ENCODE measurements at regions of chr2 and their contacts with region 1.

Region 1: GRCh38 chr2:241870611-241871537 is 1.3 kb downstream of the RTP5 start:
- DNase-seq: no peak
- H3K4me3 ChIP-seq: no peak overlapping the region
- H3K4me3 Mint-ChIP-seq: no peak overlapping the region
- H3K27ac ChIP-seq: no peak overlapping the region
- H3K27ac Mint-ChIP-seq: peak overlapping the region in 2 of 7 donors; percentile 13 to 24
- H3K4me1 ChIP-seq: no peaks in the 10 kb centered on the region
- H3K4me1 Mint-ChIP-seq: no peaks in the 10 kb centered on the region
- H3K27me3 ChIP-seq: peaks cover 0 to 16% of the 10 kb centered on the region in 2 donors
- H3K27me3 Mint-ChIP-seq: peaks cover 12 to 28% (median 14%) of the 10 kb centered on the region in 3 donors
- CTCF ChIP-seq: no peak

Region 2: GRCh38 chr2:241895712-241896641 is 25.1 kb after region 1 on chr2:
- intact Hi-C with region 1: no loop called
- DNase-seq: no peak
- H3K4me3 ChIP-seq: no peak overlapping the region
- H3K4me3 Mint-ChIP-seq: no peak overlapping the region
- H3K27ac ChIP-seq: no peak overlapping the region
- H3K27ac Mint-ChIP-seq: peak overlapping the region in 1 of 7 donors; percentile 75
- H3K4me1 ChIP-seq: no peaks in the 10 kb centered on the region
- H3K4me1 Mint-ChIP-seq: no peaks in the 10 kb centered on the region
- H3K27me3 ChIP-seq: no peaks in the 10 kb centered on the region
- H3K27me3 Mint-ChIP-seq: peaks cover 0 to 2% (median 0%) of the 10 kb centered on the region in 3 donors
- CTCF ChIP-seq: no peak

Region 3: GRCh38 chr2:241909769-241910168 is 38.9 kb after region 1 on chr2:
- intact Hi-C with region 1: loop called in 1 of 2 experiments (anchors 2 kb)
- DNase-seq: no peak
- H3K4me3 ChIP-seq: no peak overlapping the region
- H3K4me3 Mint-ChIP-seq: no peak overlapping the region
- H3K27ac ChIP-seq: no peak overlapping the region
- H3K27ac Mint-ChIP-seq: no peak overlapping the region
- H3K4me1 ChIP-seq: no peaks in the 10 kb centered on the region
- H3K4me1 Mint-ChIP-seq: no peaks in the 10 kb centered on the region
- H3K27me3 ChIP-seq: no peaks in the 10 kb centered on the region
- H3K27me3 Mint-ChIP-seq: peaks cover 0 to 4% (median 1%) of the 10 kb centered on the region in 3 donors
- CTCF ChIP-seq: no peak

Measured in CD14-positive monocyte (primary cell).